CD4-positive, alpha-beta T cell (primary cell): ENCODE measurements at regions of chr19 and their contacts with region 1.

Region 1: DNA sequence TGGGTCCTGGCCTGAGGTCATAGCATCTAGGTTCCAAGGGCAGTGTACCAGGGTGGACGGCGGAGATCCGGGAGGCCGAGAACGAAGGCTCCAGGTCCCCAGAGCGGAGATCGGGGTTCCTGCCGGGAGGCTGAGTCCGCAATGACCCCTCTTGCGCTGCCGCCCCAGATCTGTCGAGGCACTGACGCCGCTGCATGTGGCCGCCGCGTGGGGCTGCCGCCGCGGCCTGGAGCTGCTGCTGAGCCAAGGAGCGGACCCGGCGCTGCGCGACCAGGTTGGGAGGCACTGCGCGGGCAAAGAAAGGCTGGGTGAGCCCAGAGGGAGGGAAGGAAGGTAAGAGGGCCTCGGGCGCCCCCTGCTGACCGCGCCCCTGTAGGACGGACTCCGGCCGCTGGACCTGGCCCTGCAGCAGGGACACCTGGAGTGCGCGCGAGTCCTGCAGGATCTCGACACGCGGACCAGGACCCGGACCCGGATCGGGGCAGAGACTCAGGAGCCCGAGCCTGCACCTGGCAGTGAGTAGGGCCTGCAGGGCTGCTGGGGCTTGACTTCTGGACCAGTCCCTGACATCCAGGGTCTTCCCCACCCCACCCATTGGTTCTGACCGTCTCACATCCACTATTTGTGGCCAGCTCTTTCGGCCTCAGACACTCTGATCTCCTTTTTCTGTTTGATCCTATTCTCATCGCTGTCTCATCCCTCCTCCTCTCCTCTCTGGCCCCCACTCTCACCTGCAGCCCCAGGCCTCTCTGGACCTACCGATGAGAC is 971 bp downstream of the ANKLE1 start:
- DNase-seq: peak; percentile 58 to 89 (median 74)
- ATAC-seq: peak; percentile 96
- H3K4me3 ChIP-seq: peak overlapping the region; percentile 51
- H3K4me3 Mint-ChIP-seq: peak overlapping the region; percentile 63
- H3K27ac ChIP-seq: no peak overlapping the region
- H3K27ac Mint-ChIP-seq: no peak overlapping the region
- H3K4me1 ChIP-seq: peaks cover 20% of the 10 kb centered on the region
- H3K4me1 Mint-ChIP-seq: peaks cover 10% of the 10 kb centered on the region
- H3K27me3 ChIP-seq: peaks cover 0 to 5% of the 10 kb centered on the region in 2 experiments
- H3K27me3 Mint-ChIP-seq: peaks cover 11% of the 10 kb centered on the region
- CTCF ChIP-seq: peak; percentile 97

Region 2: DNA sequence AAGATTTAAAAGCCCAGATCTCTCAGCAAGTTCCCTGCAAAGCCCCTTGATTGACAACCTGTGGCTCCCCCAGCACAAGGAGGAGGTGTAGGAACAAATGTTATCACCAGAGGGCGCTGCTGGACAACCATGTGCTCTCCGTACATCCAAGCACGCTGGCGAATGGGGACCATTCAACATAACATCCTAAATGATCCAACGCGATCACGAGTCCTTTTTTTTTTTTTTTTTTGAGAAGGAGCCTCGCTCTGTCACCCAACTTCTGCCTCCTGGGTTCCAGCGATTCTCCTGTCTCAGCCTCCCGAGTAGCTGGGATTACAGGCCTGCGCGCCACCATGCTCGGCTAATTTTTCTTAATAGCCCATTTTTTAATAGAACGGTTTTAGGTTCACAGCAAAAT is 511.1 kb before region 1 on chr19:
- CTCF ChIA-PET with region 1: no interaction called
- POLR2A ChIA-PET with region 1: no interaction called
- intact Hi-C with region 1: loop called (anchors 1 kb)
- DNase-seq: peak; percentile 41 to 88 (median 68)
- ATAC-seq: peak; percentile 61
- H3K4me3 ChIP-seq: no peak overlapping the region
- H3K4me3 Mint-ChIP-seq: no peak overlapping the region
- H3K27ac ChIP-seq: no peak overlapping the region
- H3K27ac Mint-ChIP-seq: no peak overlapping the region
- H3K4me1 ChIP-seq: no peaks in the 10 kb centered on the region
- H3K4me1 Mint-ChIP-seq: no peaks in the 10 kb centered on the region
- H3K27me3 ChIP-seq: peaks cover 5 to 7% of the 10 kb centered on the region in 2 experiments
- H3K27me3 Mint-ChIP-seq: peaks cover 57% of the 10 kb centered on the region
- CTCF ChIP-seq: peak; percentile 79

Region 3: GRCh38 chr19:17205237-17206140 is 77.2 kb before region 1 on chr19:
- CTCF ChIA-PET with region 1: interaction called, 3 read pairs
- POLR2A ChIA-PET with region 1: no interaction called
- intact Hi-C with region 1: loop called (anchors 1 to 2 kb)
- DNase-seq: peak; percentile 56 to 81 (median 63)
- ATAC-seq: peak; percentile 82
- H3K4me3 ChIP-seq: no peak overlapping the region
- H3K4me3 Mint-ChIP-seq: no peak overlapping the region
- H3K27ac ChIP-seq: no peak overlapping the region
- H3K27ac Mint-ChIP-seq: no peak overlapping the region
- H3K4me1 ChIP-seq: no peaks in the 10 kb centered on the region
- H3K4me1 Mint-ChIP-seq: no peaks in the 10 kb centered on the region
- H3K27me3 ChIP-seq: no peaks in the 10 kb centered on the region
- H3K27me3 Mint-ChIP-seq: no peaks in the 10 kb centered on the region
- CTCF ChIP-seq: peak; percentile 68

Region 4: DNA sequence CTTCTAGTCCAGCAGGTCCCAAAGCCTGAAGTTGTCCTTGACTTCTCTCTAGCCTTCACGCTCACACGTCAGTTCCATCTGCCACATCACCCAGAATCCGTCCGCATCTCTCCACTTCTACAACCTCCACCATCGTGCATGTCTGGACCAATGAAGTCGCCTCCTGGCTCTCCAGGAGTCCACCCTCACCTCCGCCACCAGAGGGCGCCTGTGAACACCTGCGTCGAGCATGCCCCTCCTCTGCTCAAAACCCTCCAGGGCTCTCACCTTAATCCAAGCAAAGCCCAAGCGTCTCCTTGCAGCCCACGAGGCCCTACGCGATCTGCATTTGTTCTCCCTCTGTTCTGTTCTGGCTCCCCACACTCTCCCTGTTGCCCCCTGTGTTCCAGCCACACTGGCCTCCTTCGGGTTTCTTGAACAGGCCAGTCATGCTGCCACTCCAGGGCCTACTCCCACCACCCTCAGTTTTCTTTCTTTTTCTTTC is 21.8 kb before region 1 on chr19:
- CTCF ChIA-PET with region 1: interaction called, 21 read pairs
- POLR2A ChIA-PET with region 1: no interaction called
- intact Hi-C with region 1: loop called (anchors 1 to 2 kb)
- DNase-seq: peak; percentile 83 to 94 (median 89)
- ATAC-seq: peak; percentile 100
- H3K4me3 ChIP-seq: no peak overlapping the region
- H3K4me3 Mint-ChIP-seq: no peak overlapping the region
- H3K27ac ChIP-seq: no peak overlapping the region
- H3K27ac Mint-ChIP-seq: no peak overlapping the region
- H3K4me1 ChIP-seq: peaks cover 18% of the 10 kb centered on the region
- H3K4me1 Mint-ChIP-seq: peaks cover 5% of the 10 kb centered on the region
- H3K27me3 ChIP-seq: no peaks in the 10 kb centered on the region
- H3K27me3 Mint-ChIP-seq: no peaks in the 10 kb centered on the region
- CTCF ChIP-seq: peak; percentile 88